B cell (primary cell): ENCODE measurements at regions of chr21 and their contacts with region 1.

Region 1: GRCh38 chr21:27526451-27526850 is 559.6 kb upstream of the ADAMTS5 start:
- DNase-seq: no peak
- ATAC-seq: no peak
- H3K4me3 ChIP-seq: no peak overlapping the region
- H3K4me3 Mint-ChIP-seq: no peak overlapping the region
- H3K27ac ChIP-seq: no peak overlapping the region
- H3K27ac Mint-ChIP-seq: no peak overlapping the region
- H3K4me1 ChIP-seq: no peaks in the 10 kb centered on the region
- H3K4me1 Mint-ChIP-seq: no peaks in the 10 kb centered on the region
- H3K27me3 ChIP-seq: no peaks in the 10 kb centered on the region
- H3K27me3 Mint-ChIP-seq: no peaks in the 10 kb centered on the region
- CTCF ChIP-seq: no peak

Region 2: GRCh38 chr21:27564684-27565301 is 38.3 kb after region 1 on chr21:
- CTCF ChIA-PET with region 1: no interaction called
- POLR2A ChIA-PET with region 1: no interaction called
- intact Hi-C with region 1: loop called (anchors 5 kb)
- DNase-seq: no peak
- ATAC-seq: no peak
- H3K4me3 ChIP-seq: no peak overlapping the region
- H3K4me3 Mint-ChIP-seq: no peak overlapping the region
- H3K27ac ChIP-seq: no peak overlapping the region
- H3K27ac Mint-ChIP-seq: no peak overlapping the region
- H3K4me1 ChIP-seq: no peaks in the 10 kb centered on the region
- H3K4me1 Mint-ChIP-seq: no peaks in the 10 kb centered on the region
- H3K27me3 ChIP-seq: no peaks in the 10 kb centered on the region
- H3K27me3 Mint-ChIP-seq: no peaks in the 10 kb centered on the region
- CTCF ChIP-seq: no peak